Natural killer cell (primary cell): ENCODE measurements at regions of chr11 and their contacts with region 1.

Region 1: GRCh38 chr11:130131961-130132850 is 27.4 kb upstream of the ST14 start:
- DNase-seq: peak; percentile 28 to 80
- ATAC-seq: peak; percentile 82 to 97 (median 96)
- H3K4me3 ChIP-seq: no peak overlapping the region
- H3K4me3 Mint-ChIP-seq: no peak overlapping the region
- H3K27ac ChIP-seq: no peak overlapping the region
- H3K27ac Mint-ChIP-seq: no peak overlapping the region
- H3K4me1 ChIP-seq: no peaks in the 10 kb centered on the region
- H3K4me1 Mint-ChIP-seq: peaks cover 6 to 14% of the 10 kb centered on the region in 2 donors
- H3K27me3 ChIP-seq: no peaks in the 10 kb centered on the region
- H3K27me3 Mint-ChIP-seq: no peaks in the 10 kb centered on the region
- CTCF ChIP-seq: peak; percentile 91

Region 2: DNA sequence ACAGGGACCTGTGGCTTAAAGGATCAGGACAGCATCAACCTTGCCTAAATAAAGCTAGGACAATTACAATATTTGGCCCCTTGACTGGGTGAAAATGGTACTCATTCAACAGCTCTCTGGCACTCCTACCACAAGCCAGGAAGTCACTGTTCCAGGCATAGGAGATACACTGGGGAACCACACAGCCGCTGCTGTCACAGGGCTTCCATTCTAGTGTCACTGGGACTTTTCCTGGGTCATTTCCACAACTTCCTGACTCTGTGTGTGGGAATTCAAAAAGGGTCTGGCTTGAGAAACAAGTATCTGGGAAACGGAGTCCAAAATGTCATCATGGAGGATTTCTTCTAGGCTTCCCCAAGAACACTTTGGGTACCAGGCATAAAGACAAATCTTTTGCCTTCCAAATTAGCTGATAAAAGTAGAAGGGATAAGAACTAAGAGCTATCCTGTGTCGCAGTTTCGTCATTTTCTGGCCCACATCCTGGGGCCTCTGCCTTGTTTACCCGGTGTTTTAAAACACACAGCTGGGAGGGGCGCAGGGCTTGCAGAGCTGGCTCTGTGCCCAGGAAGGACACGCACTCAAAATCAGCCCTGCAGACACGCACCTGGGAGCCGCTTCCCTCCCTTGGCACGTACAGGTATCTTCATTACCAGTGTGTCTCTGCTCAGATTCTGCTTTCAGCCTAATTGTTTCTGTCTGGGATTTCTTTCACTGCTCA is 278.5 kb before region 1 on chr11:
- intact Hi-C with region 1: no loop called
- DNase-seq: peak in 1 of 2 donors; percentile 91
- ATAC-seq: peak in 2 of 3 donors; percentile 32 to 59
- H3K4me3 ChIP-seq: no peak overlapping the region
- H3K4me3 Mint-ChIP-seq: no peak overlapping the region
- H3K27ac ChIP-seq: no peak overlapping the region
- H3K27ac Mint-ChIP-seq: no peak overlapping the region
- H3K4me1 ChIP-seq: no peaks in the 10 kb centered on the region
- H3K4me1 Mint-ChIP-seq: no peaks in the 10 kb centered on the region
- H3K27me3 ChIP-seq: no peaks in the 10 kb centered on the region
- H3K27me3 Mint-ChIP-seq: peaks cover 0 to 5% of the 10 kb centered on the region in 2 donors
- CTCF ChIP-seq: no peak

Region 3: GRCh38 chr11:129922674-129923073 is 209.5 kb before region 1 on chr11:
- intact Hi-C with region 1: loop called (anchors 1 kb)
- DNase-seq: no peak
- ATAC-seq: no peak
- H3K4me3 ChIP-seq: no peak overlapping the region
- H3K4me3 Mint-ChIP-seq: no peak overlapping the region
- H3K27ac ChIP-seq: no peak overlapping the region
- H3K27ac Mint-ChIP-seq: no peak overlapping the region
- H3K4me1 ChIP-seq: peaks cover 10% of the 10 kb centered on the region
- H3K4me1 Mint-ChIP-seq: peaks cover 5 to 6% of the 10 kb centered on the region in 2 donors
- H3K27me3 ChIP-seq: no peaks in the 10 kb centered on the region
- H3K27me3 Mint-ChIP-seq: no peaks in the 10 kb centered on the region
- CTCF ChIP-seq: no peak

Region 4: DNA sequence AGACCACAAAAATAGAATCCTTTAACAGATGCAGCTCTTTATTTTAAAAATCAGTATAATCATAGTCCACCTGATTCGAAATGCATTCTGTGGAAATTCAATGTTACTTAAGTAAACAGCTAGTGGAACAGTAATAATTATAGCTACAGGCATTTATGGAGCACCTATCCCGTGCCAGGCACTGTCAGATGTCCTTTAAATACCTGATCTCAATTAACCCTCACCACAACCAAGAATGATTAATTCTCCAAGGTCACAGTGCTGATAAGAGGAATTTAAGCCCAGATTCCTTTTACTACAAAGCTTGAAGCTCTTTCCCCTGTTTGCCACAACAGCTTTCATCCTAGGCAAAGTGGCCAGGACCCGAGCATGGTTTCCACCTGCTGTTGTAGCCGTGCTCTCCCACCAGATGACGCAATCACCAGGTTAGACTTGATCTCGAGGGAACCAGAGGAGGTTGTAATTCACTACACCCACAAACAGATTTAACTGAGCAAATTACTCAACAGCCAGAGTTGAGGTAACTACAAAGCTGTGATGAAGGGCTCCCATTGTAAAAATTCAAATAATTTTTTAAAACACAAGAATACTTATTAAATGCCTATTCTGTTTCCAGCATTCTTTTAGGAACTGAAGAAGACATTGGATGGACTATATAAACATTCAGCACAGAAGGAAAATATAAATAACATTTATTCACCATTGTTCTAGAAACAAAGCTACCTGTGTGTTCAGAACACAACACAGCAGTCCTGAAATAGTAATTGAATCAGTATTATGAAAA is 139.9 kb before region 1 on chr11:
- intact Hi-C with region 1: loop called (anchors 1 kb)
- DNase-seq: peak in 1 of 2 donors; percentile 70
- ATAC-seq: peak; percentile 55 to 74 (median 70)
- H3K4me3 ChIP-seq: no peak overlapping the region
- H3K4me3 Mint-ChIP-seq: no peak overlapping the region
- H3K27ac ChIP-seq: no peak overlapping the region
- H3K27ac Mint-ChIP-seq: no peak overlapping the region
- H3K4me1 ChIP-seq: peaks cover 8% of the 10 kb centered on the region
- H3K4me1 Mint-ChIP-seq: peaks cover 13 to 17% of the 10 kb centered on the region in 2 donors
- H3K27me3 ChIP-seq: no peaks in the 10 kb centered on the region
- H3K27me3 Mint-ChIP-seq: no peaks in the 10 kb centered on the region
- CTCF ChIP-seq: no peak

Region 5: DNA sequence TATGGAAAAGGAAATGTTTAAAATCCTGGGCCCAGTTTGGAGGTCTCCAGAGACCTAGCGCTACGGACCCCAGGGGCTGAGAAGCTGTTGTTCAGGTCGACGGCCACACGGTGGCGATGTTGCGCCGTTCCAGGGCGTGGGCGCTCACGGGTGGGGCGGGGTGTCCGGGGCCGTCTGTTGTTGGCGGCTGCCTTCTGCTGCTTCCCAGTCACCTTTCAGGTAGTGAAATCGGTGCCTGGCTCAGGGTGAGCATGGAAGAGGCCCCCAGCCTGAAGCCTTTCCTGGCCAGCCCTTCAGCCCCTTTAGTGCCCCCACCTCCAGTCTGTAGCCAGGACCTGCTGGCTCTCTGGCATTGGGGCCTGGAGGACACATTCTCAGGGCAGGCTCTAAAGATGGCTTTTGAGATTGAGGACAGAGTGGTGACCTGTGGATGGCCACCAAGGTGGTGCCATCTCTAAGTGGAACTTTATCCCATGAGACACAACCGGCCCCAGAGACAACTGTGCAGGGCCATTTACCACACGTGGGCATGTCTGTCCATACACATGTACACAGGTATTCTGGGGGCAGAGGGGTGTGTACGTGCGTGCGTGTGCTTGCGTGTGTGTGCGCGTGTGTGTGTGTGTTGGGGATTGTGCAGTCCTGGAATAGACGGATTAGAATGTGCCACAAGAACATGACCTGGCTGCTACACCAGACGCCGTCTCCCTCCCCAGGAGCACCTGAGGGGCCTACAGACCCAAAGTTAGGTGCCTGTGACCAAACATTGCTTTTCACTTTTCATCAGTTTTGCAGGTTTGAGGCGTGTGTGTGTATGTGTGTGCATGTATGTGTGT is 81.2 kb after region 1 on chr11:
- intact Hi-C with region 1: no loop called
- DNase-seq: peak; percentile 72 to 84
- ATAC-seq: peak; percentile 86 to 99 (median 99)
- H3K4me3 ChIP-seq: no peak overlapping the region
- H3K4me3 Mint-ChIP-seq: no peak overlapping the region
- H3K27ac ChIP-seq: no peak overlapping the region
- H3K27ac Mint-ChIP-seq: no peak overlapping the region
- H3K4me1 ChIP-seq: peaks cover 10% of the 10 kb centered on the region
- H3K4me1 Mint-ChIP-seq: no peaks in the 10 kb centered on the region
- H3K27me3 ChIP-seq: no peaks in the 10 kb centered on the region
- H3K27me3 Mint-ChIP-seq: peaks cover 0 to 6% of the 10 kb centered on the region in 2 donors
- CTCF ChIP-seq: peak; percentile 98